ENCODE measurements at regions of chr19 and their contacts with region 1.

Region 1: DNA sequence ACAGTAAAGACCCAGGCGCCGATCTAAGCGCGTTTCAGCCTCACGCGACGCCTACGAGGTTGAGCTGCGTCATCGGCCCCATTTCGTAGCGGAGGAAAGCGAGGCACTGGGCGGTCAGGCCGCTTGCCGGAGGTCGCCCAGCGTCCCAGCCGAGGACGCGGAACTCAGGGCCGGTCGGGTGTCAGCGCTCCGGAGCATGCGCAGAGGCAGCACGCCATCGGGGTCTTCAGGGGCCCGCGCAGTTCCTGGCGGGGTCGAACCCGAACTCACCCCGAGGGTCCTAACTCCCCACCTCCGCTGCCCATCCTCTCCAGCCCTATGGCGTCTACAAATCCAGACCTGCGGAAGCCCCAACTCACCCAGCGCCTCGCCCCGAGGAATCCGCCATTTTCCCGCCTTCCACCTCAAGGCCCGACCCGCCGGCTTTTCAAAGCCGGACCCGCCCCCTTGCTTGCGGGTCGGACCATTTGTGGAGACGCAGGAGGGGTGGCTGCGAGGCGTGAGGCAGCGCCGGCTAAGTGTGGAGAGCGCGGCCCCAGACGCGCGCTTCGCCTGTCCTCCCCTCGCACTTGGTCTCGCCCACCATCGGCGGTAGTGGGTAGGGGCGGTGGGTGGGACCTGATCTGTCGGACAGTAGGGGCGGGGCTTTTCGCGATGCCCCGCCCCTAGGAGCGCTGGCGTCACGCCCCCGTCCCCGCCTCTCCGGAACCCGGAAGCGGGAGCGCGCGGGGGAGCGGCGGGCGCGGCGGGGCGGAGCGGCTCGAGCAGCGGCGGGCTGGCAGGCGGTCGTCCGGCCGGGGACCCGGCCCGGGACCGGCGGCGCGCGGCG is at the starts of genes HAUS8 and MYO9B:
- DNase-seq: peak; percentile 100
- ATAC-seq: peak; percentile 82
- H3K4me3 Mint-ChIP-seq: peak within 1 kb of the TSS; percentile 99
- H3K27ac Mint-ChIP-seq: peak within 1 kb of the TSS; percentile 98
- H3K4me1 Mint-ChIP-seq: peaks cover 56% of the 10 kb centered on the region
- H3K27me3 Mint-ChIP-seq: no peaks in the 10 kb centered on the region
- total RNA-seq, gene HAUS8: 32.6 to 41.7 TPM
- total RNA-seq, gene MYO9B: 90.3 to 98.5 TPM

Region 2: DNA sequence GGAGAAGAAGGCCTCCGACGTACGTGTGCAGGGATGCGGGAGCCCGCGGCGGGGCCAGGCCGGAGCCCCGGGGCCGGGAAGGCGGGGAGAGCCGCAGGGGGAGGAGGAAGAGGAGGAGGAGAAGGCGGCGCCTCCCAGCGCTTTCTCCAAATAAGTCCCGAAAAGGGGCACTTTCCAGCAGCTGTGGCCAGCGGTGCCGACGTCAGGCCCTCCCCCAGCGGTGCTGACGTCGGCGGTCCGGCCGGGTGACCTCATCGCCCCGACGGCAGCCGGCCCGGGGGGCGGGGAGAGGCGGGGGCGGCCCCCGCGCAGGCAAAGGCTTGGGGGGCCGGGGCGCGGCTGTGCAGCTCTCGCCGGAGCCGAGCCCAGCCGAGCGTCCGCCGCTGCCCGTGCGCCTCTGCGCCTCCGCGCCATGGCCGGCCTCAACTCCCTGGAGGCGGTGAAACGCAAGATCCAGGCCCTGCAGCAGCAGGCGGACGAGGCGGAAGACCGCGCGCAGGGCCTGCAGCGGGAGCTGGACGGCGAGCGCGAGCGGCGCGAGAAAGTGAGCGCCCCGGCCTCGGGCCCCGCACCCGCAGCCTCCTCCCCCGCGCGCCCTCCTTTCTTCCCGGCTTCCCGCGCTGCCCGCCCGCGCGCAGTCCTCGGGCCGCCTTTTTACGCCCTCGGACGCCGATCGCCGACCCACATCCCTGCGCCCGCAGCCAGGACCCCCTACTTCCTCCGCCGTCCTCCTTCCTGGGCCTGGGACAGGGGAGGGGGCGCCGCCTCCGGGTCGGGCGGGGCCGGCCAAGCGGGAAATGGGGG is 998.9 kb before region 1 on chr19 and contains the start of gene TPM4:
- CTCF ChIA-PET with region 1: no interaction called
- POLR2A ChIA-PET with region 1: no interaction called
- intact Hi-C with region 1: loop called in 1 of 2 experiments (anchors 10 kb)
- DNase-seq: peak; percentile 94
- ATAC-seq: peak; percentile 42
- H3K4me3 Mint-ChIP-seq: peak within 1 kb of the TSS; percentile 99
- H3K27ac Mint-ChIP-seq: peak within 1 kb of the TSS; percentile 98
- H3K4me1 Mint-ChIP-seq: peaks cover 64% of the 10 kb centered on the region
- H3K27me3 Mint-ChIP-seq: no peaks in the 10 kb centered on the region
- total RNA-seq, gene TPM4: 362 to 416 TPM

Region 3: GRCh38 chr19:16572332-16573211 is 502.7 kb before region 1 on chr19 and contains the start of gene SLC35E1:
- CTCF ChIA-PET with region 1: no interaction called
- POLR2A ChIA-PET with region 1: no interaction called
- intact Hi-C with region 1: loop called in 1 of 2 experiments (anchors 5 kb)
- DNase-seq: peak; percentile 96
- ATAC-seq: peak; percentile 97
- H3K4me3 Mint-ChIP-seq: peak within 1 kb of the TSS; percentile 96
- H3K27ac Mint-ChIP-seq: peak within 1 kb of the TSS; percentile 96
- H3K4me1 Mint-ChIP-seq: peaks cover 53% of the 10 kb centered on the region
- H3K27me3 Mint-ChIP-seq: no peaks in the 10 kb centered on the region
- total RNA-seq, gene SLC35E1: 51.5 to 72.1 TPM

Region 4: DNA sequence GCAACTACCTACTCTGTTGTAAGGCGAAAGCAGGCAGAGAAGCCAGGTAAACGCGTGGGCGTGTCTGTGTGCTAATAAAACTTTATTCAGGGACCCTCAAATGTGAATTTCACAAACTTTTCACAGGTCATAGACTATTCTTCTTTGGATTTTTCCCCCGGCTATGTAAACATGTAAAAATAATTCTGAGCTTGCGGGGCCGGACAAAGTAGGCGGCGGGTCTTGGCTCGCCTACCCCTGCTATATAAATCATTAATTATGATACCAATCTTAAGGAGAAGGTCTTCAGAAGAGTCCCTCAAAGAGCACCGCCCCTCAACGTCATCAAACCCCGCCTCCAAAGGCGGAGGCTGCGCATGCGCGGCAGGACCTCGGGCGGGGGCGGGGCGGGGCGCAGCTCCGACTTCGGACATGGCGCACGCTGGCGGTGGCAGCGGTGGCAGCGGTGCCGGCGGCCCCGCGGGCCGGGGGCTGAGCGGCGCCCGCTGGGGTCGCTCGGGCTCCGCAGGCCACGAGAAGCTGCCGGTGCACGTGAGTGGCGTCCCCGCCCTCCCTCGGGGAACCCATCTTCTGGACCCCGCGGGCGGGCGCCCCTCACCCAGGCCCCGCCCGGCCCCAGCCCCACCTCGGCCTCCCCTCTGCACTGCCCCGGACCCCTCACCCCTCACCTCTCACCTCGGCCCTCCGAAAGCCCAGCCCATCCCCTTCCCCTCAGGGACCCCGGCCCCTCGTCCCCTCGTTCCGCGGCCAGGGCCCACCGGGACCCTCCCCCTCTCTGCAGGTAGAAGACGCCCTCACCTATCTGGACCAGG is 246.0 kb before region 1 on chr19 and contains the start of gene SIN3B:
- CTCF ChIA-PET with region 1: no interaction called
- POLR2A ChIA-PET with region 1: no interaction called
- intact Hi-C with region 1: loop called in 1 of 2 experiments (anchors 1 kb)
- DNase-seq: peak; percentile 93
- ATAC-seq: peak; percentile 91
- H3K4me3 Mint-ChIP-seq: peak within 1 kb of the TSS; percentile 79
- H3K27ac Mint-ChIP-seq: peak within 1 kb of the TSS; percentile 82
- H3K4me1 Mint-ChIP-seq: peaks cover 38% of the 10 kb centered on the region
- H3K27me3 Mint-ChIP-seq: peaks cover 20% of the 10 kb centered on the region
- total RNA-seq, gene SIN3B: 27.6 to 28.5 TPM

Region 5: DNA sequence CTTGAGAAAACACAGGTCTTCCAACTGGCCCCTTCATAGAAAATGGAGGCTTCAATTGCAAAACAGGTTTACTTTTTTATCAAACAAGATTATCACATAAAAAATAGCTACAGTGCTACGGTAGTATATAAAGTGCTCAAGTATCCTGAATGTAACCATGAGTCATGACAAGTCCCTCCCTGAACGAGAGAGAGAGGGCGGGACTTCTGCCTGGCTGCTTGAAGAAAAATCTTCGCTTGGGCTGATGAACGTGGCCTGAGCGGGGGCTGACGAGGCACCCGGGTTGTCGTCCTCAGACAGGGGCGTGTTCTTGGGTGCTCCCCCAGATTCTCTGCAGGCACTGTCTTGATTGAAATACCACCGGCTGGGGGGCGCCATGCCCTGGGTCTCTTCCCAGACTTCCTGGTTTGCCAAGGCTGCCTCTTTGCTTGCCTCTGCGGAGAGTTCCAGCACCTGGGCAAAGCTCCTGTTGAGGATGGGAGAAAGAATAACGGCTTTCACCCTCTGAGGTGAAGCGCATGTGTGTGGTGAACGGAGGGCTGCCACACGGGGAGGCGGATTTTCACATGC is 25.5 kb before region 1 on chr19:
- CTCF ChIA-PET with region 1: no interaction called
- POLR2A ChIA-PET with region 1: no interaction called
- intact Hi-C with region 1: no loop called
- DNase-seq: no peak
- ATAC-seq: no peak
- H3K4me3 Mint-ChIP-seq: no peak overlapping the region
- H3K27ac Mint-ChIP-seq: no peak overlapping the region
- H3K4me1 Mint-ChIP-seq: no peaks in the 10 kb centered on the region
- H3K27me3 Mint-ChIP-seq: no peaks in the 10 kb centered on the region

Region 6: DNA sequence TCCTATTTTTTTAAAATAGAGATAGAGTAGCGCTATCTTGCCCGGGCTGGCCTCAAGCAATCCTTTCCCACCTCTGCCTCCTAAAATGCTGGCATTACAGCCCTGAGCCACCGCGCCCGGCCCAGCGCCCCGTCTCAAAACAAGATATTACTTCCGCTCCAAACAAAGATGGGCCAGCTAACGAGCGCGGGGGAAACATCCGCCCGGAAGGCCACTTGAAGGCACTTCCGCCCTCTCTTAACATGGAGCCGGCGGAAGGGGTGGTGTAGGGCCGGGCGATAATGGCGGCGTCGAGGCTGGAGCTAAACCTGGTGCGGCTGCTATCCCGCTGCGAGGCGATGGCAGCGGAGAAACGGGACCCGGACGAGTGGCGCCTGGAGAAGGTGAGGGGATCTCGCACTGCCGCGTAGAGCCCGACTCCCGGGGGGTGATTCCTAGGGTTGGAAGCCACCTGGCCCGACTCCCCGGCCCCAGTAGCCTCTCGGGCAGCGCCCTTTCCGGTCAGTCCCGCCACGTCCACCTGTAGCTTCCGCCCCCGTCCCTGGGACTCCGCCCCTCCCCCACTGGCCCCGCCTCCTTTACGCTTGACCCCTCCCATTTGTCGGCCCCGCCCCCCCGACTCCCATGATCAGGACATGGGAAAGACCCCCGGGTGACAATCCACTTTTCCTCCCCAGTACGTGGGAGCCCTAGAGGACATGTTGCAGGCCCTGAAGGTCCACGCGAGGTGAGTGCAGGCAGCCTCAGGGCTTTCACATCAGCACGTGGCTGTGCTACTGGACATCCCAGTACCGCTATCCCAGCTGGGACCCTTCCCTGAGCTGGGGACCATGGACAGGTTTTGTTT is 140.1 kb after region 1 on chr19 and contains the start of gene USE1:
- CTCF ChIA-PET with region 1: no interaction called
- POLR2A ChIA-PET with region 1: no interaction called
- intact Hi-C with region 1: loop called (anchors 1 to 5 kb)
- DNase-seq: peak; percentile 93
- ATAC-seq: peak; percentile 97
- H3K4me3 Mint-ChIP-seq: peak within 1 kb of the TSS; percentile 80
- H3K27ac Mint-ChIP-seq: peak within 1 kb of the TSS; percentile 95
- H3K4me1 Mint-ChIP-seq: peaks cover 21% of the 10 kb centered on the region
- H3K27me3 Mint-ChIP-seq: no peaks in the 10 kb centered on the region
- total RNA-seq, gene USE1: 22.6 to 24.5 TPM

Region 7: DNA sequence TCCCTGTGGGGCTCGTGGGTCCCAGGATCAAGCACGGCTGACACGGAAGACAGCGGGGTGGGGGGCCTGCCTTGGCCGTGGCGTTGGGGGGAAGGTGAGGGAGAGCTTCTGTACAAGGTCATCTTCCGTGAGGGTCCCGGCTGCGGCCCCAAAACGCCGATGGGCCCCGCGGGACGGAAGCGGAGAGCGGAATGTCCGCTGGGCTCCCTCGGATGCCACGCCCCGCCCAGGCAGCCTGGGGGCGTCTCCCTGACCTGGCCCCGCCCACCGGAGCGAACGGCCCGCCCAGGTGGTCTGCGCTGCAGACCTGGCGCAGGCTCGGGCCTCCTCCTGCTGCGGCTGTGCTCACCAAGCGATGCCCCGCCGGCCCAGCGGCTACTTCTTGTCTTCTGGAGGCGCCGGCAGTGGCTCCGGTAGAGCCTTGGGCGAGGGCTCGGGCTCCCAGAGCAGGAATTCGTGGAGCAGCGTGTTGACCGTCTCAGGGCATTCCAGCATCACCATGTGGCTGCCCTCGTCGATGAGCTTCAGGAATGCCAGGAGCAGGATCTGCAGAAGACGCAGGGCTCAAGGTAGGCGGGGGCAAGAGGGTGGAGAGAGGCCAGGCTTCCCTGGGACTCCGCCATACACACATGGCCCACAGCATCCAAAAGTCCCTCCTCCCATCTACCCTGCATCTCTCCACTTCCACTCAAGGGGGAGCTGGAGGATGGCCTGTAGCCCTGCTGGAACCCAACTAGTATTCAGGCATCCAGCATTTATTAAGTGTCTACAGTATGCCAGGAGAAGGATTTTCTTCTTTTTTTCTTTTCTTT is 217.2 kb after region 1 on chr19:
- CTCF ChIA-PET with region 1: no interaction called
- POLR2A ChIA-PET with region 1: no interaction called
- intact Hi-C with region 1: loop called in 1 of 2 experiments (anchors 1 kb)
- DNase-seq: peak; percentile 90
- ATAC-seq: peak; percentile 98
- H3K4me3 Mint-ChIP-seq: peak overlapping the region; percentile 88
- H3K27ac Mint-ChIP-seq: peak overlapping the region; percentile 84
- H3K4me1 Mint-ChIP-seq: peaks cover 5% of the 10 kb centered on the region
- H3K27me3 Mint-ChIP-seq: no peaks in the 10 kb centered on the region

Region 8: GRCh38 chr19:17419621-17420466 is 344.6 kb after region 1 on chr19 and contains the start of gene MVB12A:
- CTCF ChIA-PET with region 1: no interaction called
- POLR2A ChIA-PET with region 1: no interaction called
- intact Hi-C with region 1: loop called in 1 of 2 experiments (anchors 1 kb)
- DNase-seq: peak; percentile 97
- ATAC-seq: peak; percentile 95
- H3K4me3 Mint-ChIP-seq: peak within 1 kb of the TSS; percentile 91
- H3K27ac Mint-ChIP-seq: peak within 1 kb of the TSS; percentile 87
- H3K4me1 Mint-ChIP-seq: peaks cover 11% of the 10 kb centered on the region
- H3K27me3 Mint-ChIP-seq: no peaks in the 10 kb centered on the region
- total RNA-seq, gene MVB12A: 27.6 to 32.6 TPM